Left colon (tissue), 2 donors: ENCODE measurements at regions of chr2 and their contacts with region 1.

Region 1: DNA sequence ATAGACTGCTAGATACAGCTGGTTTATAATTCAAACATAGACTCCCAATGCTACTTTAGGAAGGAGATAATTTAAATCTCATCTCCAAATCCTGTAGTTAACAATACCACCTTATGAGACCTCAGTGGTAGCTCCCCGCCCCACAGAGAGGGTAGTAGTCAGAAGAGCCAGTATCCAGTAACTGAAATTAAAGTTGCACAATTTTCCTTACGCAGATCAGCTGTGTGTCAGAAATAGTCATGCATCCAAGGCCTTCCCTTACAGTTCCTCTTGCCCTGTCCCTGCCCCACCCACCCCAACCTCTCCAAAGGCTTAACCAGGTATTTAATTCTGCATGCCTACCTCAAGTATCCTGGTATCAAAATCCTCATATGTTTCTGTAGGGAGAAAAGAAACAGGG is 15.5 kb downstream of the MRPS5 start:
- DNase-seq: no peak
- ATAC-seq: no peak

Region 2: GRCh38 chr2:94776036-94776435 is 330.0 kb before region 1 on chr2:
- intact Hi-C with region 1: no loop called
- DNase-seq: no peak
- ATAC-seq: no peak

Region 3: DNA sequence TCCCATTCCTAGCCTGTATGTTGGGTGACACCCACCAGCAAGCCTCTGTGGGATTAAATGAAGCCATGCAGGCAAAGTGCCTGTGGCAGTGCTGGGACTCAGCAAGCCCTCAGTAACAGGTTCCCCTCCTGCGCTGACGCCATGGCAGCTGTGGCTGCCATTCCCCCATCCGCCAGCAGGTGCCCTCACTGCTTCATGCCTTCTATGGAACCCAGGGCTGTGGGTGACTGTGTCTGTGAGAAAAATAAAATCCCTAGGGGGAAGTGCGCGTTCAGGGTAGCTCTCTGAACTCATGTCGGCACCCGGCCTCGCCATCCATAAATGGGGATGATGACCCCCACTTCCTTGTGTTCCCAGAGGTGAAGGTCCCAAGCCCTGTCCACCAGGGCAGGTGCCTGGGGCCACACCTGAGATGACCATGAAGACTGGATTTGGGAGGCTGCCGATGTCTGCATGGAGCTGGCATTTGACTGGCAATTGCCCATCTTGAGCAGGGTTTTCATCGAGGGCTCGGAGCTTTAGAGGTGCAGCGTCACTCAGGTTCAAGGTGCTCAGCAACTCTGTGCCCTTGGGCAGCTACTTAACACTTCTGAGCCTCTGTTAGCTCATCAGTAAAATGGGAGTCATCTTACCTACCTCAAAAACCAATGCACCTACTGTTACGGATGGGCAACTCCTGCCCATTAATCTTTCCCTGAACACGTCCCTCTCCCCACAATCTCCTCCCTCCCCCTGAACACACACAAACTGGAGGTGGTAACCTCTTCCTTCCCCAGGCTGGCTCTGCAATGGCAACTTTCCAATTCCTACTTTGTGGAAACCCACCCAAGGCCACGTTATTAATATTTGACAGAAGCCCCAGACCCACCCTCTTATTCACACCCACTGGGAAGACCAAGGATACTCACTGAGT is 83.5 kb before region 1 on chr2:
- intact Hi-C with region 1: loop called in 1 of 2 experiments (anchors 10 kb)
- DNase-seq: peak in 1 of 2 donors; percentile 76
- ATAC-seq: peak; percentile 89

Region 4: DNA sequence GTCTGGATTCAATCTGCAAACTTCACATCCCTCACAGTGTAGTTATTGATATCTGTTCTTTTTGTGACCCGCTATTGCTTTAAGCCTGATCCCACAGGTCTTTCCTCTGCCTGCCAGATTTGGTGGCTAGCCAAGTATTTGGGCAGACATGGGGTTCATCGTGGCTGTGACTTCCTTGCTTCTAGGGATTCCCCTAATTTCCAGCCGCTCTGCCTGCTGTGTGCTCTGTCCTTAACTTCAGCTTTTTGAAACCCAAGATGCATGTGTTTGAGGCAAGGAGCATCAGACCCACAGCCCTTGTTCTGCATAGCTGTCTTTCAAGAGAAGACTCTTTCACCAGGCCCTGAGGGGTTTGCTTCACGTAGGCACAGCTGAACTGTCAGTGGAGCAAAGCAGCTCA is 1283.7 kb after region 1 on chr2:
- intact Hi-C with region 1: no loop called
- DNase-seq: no peak
- ATAC-seq: no peak

Region 5: GRCh38 chr2:96536445-96537065 is 1430.5 kb after region 1 on chr2 and contains the start of gene ARID5A:
- intact Hi-C with region 1: no loop called
- DNase-seq: peak; percentile 94 to 96
- ATAC-seq: peak; percentile 76
- total RNA-seq, gene ARID5A: 5.6 to 13.7 TPM